Posterior vena cava (tissue), 2 donors: ENCODE measurements at regions of chr7 and their contacts with region 1.

Region 1: DNA sequence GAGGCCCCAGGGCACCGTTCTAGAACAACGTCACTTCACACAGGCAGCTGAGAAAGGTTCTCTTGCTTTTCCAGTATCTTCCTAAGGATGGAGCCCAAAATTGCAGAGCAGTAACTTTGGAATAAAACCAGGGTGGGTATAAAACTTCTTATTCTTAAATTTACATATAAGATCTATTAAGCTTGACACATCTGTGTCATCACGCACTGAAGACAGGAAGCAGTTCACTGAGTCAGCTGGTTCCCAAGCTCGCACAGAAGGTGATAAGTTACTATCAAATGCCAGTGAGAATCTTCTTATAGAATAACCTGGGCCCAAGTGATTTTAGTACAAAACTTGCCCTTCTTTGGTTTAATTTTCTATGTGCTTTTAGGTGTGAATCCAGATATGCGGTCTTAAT is 70.2 kb downstream of the RABGEF1 start:
- DNase-seq: no peak

Region 2: DNA sequence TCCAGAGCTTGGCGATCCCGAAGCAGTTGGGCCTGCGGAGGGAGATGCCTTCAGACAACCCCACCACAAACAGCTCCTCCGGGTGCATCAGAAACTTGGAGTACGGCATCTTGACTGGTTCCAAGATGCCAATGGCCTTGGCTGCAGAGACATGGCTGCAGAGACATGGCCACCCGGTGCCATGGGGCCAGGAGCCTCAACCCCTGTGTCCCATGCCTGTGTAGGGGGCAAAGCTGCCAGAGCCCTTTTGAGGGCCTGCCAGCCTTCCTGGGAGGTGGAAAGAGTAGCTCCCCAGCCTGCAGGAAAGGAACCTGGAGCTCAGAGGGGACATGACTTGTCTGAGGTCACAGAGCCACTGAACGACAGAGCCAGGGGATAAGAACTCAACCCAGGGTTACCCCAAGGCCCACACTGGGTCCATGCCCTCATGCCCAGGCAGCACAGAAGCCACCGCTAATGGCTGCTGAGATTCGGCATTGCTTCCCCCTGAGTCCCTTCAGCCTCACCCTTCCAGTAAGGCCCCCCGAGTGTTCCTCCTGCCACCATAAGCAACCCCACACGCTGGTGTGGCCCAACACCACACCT is 13.4 kb after region 1 on chr7:
- intact Hi-C with region 1: loop called in 1 of 2 experiments (anchors 1 kb)
- DNase-seq: peak; percentile 43